A673 (cell line): ENCODE measurements at regions of chr6 and their contacts with region 1.

Region 1: GRCh38 chr6:12987783-12988182 is 271.2 kb downstream of the PHACTR1 start:
- DNase-seq: no peak
- H3K4me3 ChIP-seq: no peak overlapping the region
- H3K27ac ChIP-seq: no peak overlapping the region
- H3K4me1 ChIP-seq: no peaks in the 10 kb centered on the region
- H3K27me3 ChIP-seq: no peaks in the 10 kb centered on the region
- CTCF ChIP-seq: no peak

Region 2: GRCh38 chr6:12957321-12958051 is 30.3 kb before region 1 on chr6:
- CTCF ChIA-PET with region 1: no interaction called
- POLR2A ChIA-PET with region 1: no interaction called
- intact Hi-C with region 1: loop called (anchors 2 kb)
- DNase-seq: peak; percentile 51
- H3K4me3 ChIP-seq: peak overlapping the region; percentile 58
- H3K27ac ChIP-seq: no peak overlapping the region
- H3K4me1 ChIP-seq: peaks cover 3% of the 10 kb centered on the region
- H3K27me3 ChIP-seq: no peaks in the 10 kb centered on the region
- CTCF ChIP-seq: 0 out of 2 replicates have a peak, but pooled peaks have one; percentile 14